ENCODE measurements at regions of chr7 and their contacts with region 1.

Region 1: GRCh38 chr7:143416565-143417149 is 8.0 kb upstream of the EPHA1 start:
- DNase-seq: no peak
- H3K4me3 ChIP-seq: no peak overlapping the region
- H3K27ac ChIP-seq: no peak overlapping the region
- H3K4me1 ChIP-seq: peaks cover under 1% of the 10 kb centered on the region
- H3K27me3 ChIP-seq: peaks cover 69% of the 10 kb centered on the region
- CTCF ChIP-seq: peak; percentile 85

Region 2: DNA sequence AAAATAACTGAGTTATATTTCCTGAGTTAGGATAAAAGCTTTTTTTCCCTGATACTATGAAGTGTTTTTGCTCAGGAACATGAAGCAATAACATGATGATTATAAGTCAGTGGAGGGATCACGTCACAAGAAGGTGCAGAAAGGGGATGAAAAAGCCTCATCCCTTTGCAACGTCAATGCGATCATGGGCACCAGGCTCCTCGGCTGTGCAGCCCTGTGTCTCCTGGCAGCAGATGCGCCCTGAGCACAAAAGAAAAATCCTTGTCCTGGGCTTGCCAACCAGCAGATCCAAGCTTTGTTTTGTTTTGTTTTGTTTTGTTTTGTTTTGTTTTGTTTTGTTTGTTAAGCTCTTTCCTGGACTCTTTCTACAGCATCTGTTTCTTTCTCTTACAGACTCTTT is 770.9 kb before region 1 on chr7:
- intact Hi-C with region 1: no loop called
- DNase-seq: no peak
- H3K4me3 ChIP-seq: no peak overlapping the region
- H3K27ac ChIP-seq: no peak overlapping the region
- H3K4me1 ChIP-seq: no peaks in the 10 kb centered on the region
- H3K27me3 ChIP-seq: peaks cover 91% of the 10 kb centered on the region
- CTCF ChIP-seq: no peak

Region 3: DNA sequence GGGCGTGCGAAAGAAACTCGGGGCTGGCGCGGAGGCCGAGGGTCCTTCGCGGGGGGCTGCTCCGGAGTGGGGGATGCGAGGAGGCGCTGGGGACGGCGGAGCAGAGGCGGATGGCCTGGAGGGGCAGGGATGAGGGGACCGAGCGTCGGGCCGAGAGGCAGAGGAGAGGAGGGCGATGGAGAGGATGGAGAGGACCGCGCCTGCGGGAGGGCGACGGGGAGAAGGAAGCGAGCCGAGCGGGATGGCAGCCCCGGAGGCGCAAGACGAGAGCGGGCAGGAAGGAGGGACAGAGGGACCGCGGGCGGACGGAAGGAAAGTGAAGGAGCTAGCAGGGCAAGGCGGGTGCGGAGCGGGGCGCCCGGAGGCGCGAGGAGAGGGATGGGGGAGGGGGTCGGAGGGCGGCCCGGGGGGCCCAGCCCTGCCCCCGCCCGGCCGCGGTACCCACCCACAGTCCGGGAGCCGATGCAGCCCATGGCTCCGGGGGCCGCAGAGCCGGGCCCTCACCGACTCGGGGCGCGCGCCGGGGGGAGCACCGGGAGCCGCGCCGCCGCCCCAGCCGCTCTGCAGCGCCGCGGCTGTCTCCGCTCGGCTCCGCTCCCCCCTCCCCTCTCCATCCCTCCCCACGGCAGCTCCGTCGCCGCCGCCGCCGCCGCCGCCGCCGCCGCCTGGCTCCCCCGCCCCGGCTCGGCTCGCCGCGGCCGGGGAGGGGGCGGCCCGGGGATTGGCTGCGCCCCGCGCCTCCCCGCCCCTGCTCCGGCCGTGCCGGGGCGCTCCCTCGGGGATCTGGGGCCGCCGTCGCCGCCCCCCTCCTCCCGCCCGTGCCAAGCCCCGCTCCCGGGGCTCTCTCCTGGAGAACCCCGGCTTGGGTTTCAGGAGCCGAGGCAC is 54.3 kb before region 1 on chr7 and contains the start of gene FAM131B:
- intact Hi-C with region 1: loop called (anchors 10 kb)
- DNase-seq: no peak
- H3K4me3 ChIP-seq: peak within 1 kb of the TSS; percentile 68
- H3K27ac ChIP-seq: no peak within 1 kb of the TSS
- H3K4me1 ChIP-seq: peaks cover 19% of the 10 kb centered on the region
- H3K27me3 ChIP-seq: peaks cover 84% of the 10 kb centered on the region
- CTCF ChIP-seq: no peak
- total RNA-seq, gene FAM131B: 0.47 TPM

Measured in left ventricle myocardium inferior (tissue), 1 donor.